ENCODE measurements at regions of chr2 and their contacts with region 1.

Region 1: GRCh38 chr2:70142590-70143313 is 48.1 kb downstream of the C2orf42 start:
- DNase-seq: peak; percentile 99

Region 2: DNA sequence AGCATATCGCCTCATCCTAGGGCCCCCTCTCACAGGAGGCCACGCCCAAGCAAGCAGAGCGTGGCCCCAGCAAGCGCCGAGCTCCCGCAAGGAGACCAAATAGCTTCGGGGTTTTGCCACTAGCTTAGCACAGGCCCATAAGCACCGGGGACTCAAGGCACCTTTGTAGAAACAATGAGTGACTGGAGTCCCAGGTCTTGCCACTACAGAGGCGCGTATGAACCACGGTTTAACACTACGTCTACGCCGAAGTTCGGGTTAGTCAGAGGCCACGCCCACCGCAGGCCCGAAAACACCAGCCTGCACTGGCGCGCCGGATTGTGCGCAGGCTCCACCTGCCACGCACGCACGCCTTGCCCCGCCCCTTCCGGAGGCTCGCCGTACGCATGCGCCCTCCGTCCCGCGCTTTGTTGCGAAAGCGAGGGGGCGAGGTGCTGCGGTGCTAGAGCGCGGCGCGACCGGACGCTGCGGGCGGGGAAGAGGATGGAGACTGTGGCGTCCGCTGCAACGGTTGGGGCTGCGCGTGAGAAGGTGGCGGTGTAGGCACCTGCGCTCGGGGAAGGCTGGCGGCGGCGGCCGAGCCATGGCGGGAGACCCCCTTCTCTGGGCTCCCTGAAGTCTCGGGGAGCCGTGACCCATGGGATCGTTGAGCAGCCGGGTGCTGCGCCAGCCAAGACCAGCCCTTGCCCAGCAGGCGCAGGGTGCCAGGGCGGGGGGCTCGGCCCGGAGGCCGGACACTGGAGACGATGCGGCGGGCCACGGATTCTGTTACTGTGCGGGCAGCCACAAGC is 313.3 kb before region 1 on chr2 and contains the start of gene GMCL1:
- intact Hi-C with region 1: loop called (anchors 10 kb)
- DNase-seq: peak; percentile 98
- total RNA-seq, gene GMCL1: 5.7 TPM

Region 3: DNA sequence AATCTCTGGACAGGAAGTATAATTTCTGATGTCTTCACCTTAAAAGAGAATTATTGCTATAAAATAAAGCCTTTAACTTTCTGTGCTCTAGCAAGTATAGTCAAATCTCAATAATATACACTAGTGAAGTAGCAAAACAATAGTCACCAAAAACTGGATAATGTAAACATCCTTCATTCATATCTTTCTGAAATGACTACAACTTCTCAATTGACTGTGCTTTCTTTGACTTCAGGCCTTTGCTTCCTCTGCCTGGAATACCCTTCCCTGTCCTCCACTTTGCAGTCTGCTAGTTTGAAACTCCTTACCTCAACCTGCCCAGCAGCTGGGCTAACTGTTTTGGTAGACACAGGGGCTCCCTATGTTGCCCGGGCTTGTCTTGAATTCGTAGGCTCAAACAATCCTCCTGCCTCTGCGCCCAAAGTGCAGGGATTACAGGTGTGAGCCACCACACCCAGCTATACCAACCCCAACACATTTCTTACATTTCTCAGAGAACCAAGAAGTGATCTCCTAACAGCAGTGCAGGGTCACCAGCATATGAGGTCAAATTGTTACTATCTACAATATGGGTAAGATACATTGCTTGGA is 62.0 kb before region 1 on chr2:
- intact Hi-C with region 1: no loop called
- DNase-seq: no peak

Region 4: GRCh38 chr2:70190418-70191243 is 47.9 kb after region 1 on chr2 and contains the start of gene C2orf42:
- intact Hi-C with region 1: loop called (anchors 2 kb)
- DNase-seq: peak; percentile 96
- total RNA-seq, gene C2orf42: 12.3 TPM

Region 5: DNA sequence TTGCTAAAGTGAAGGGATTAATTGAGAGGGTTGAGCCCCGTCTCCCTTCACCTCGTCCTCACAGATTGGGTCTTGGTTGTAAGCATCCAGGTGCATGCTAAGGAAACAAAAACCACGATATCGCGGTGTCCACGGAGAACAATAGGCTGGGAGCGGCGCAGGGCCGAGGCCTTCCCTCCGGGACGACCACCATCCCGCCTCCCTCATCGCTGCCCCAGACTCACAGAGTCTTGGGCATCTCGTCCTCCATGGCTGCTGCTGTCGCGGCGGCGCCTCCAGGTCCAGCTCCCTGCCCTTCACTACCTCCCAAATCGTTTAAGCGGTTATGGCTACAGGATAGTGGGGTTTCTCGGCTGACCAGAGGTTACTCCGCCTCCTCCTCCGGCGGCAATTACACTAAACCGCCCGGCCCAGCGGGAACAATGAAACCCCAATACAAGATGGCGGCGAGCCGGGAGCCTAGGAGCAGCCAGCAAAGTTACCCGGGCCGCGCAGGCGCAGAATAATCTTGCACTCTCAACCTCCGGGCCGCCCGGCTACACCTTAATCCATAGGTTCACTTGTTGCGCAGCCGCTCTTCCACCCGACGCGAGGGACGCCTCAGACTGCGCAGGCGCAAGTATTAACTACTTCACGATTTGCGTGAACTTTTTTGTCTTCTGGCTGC is 105.6 kb after region 1 on chr2 and contains the start of gene TIA1:
- intact Hi-C with region 1: no loop called
- DNase-seq: peak; percentile 99
- total RNA-seq, gene TIA1: 49.4 TPM

Measured in cardiac septum (tissue), 1 donor.